ENCODE measurements at regions of chr12 and their contacts with region 1.

Region 1: DNA sequence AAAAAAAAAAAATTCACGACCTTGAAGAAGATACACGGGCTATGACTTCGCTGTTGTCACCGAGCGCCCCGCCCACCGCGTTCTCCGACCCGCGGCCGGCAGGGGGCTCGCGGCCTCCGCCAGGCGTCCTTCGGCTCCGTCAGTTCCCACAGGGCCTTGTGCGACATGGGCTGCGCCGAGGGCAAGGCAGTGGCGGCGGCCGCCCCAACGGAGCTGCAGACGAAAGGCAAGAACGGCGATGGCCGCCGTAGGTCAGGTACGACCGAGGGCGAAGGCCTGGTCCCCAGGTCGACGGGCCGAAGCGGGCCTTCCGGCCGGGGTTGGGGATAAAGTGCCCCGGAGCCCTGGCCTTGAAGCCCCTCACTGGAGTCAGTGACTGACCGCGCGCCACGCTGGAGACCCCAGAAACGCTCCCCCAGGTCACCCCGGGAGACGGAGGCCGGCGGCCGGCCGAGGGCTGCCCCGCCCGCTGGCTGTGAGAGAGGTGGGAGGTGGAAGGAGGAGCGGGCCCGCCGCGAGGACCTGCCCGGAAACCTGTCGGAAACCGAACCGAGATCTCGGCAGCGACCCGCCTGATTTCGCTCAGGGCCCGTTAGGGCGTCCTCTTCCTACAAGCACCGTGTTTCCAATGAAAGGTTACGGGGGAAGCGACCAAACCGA is at the start of gene TXNRD1:
- DNase-seq: peak; percentile 36 to 91
- H3K4me3 ChIP-seq: peak within 1 kb of the TSS; percentile 60 to 72
- H3K27ac ChIP-seq: peak within 1 kb of the TSS; percentile 91 to 92
- H3K4me1 ChIP-seq: peaks cover 5 to 15% of the 10 kb centered on the region in 2 donors
- H3K27me3 ChIP-seq: no peaks in the 10 kb centered on the region
- CTCF ChIP-seq: peak; percentile 91 to 98 (median 94)
- total RNA-seq, gene TXNRD1: 67.4 TPM

Region 2: DNA sequence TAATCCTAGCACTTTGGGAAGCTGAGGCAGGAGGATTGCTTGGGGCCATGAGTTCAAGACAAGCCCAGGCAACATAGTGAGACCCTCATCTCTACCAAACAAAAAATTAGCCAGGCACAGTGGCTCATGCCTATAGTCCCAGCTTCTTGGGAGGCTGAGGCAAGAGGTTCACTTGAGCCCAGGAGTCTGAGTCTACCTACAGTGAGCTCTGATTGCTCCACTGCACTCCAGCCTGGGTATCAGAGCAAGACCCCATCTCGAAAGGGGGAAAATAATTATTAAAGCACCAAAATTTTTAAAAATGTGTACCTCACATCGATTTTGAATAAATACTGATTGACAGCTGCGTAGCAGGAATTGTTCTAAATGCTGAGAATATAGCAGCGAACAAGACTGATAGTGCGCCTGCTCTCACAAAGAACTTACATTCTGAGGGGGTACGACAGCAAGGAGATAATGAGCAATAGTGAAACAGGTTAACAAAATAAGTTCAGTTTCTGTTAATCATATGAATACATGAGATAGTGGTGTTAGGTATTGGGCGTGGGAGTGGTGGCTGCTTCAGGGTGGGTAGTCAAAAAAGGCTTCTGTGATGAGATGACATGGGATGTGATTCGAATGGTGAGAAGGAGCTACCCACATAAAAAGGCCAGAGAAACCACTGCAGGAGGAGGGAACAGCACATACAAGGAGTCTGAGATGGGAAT is 131.8 kb before region 1 on chr12:
- intact Hi-C with region 1: no loop called
- DNase-seq: no peak
- H3K4me3 ChIP-seq: no peak overlapping the region
- H3K27ac ChIP-seq: no peak overlapping the region
- H3K4me1 ChIP-seq: no peaks in the 10 kb centered on the region
- H3K27me3 ChIP-seq: no peaks in the 10 kb centered on the region
- CTCF ChIP-seq: no peak

Region 3: DNA sequence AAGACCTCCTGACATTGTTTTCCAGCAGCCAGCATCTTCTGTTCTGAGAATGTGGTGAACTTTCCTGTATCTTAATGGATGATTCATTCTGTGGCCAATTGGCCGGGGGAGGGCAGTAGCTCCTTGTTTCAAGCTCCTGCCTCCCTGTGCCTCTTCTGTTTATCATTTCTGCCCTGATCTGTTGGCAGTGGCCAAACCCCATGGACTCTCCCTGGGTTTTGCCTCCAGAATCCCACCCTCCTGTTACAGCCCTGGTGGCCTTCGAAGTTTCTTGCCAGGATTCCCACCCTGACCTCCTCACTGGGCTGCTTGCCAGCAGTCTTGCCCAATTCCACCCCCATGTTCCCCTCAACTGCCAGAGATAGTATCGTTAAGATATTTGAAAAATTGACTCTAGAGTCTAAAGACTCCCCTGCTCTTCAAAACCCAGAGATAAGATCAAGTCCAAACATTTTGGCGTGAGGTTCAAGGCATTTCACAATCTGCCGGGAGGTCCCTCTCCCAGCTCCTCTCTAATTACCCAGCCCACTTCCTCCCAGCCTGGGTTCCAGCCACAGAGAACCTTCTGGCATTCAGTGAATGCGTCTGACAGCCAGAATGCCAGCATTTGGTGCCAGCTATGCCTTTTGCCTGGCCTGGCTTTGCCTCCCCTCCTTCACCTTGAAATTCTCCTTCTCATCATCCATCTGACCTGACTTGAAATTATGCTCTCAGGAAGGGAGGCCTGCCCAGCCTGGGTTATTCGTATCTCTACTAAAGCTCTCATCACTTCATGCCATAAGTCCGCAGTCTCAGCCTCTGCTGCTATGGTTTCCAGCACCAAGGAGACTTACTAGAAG is 37.9 kb before region 1 on chr12:
- intact Hi-C with region 1: loop called (anchors 2 kb)
- DNase-seq: peak; percentile 61 to 92
- H3K4me3 ChIP-seq: no peak overlapping the region
- H3K27ac ChIP-seq: peak overlapping the region; percentile 78
- H3K4me1 ChIP-seq: peaks cover 15 to 39% of the 10 kb centered on the region in 2 donors
- H3K27me3 ChIP-seq: no peaks in the 10 kb centered on the region
- CTCF ChIP-seq: peak in 2 of 3 experiments; percentile 31 to 54

Region 4: DNA sequence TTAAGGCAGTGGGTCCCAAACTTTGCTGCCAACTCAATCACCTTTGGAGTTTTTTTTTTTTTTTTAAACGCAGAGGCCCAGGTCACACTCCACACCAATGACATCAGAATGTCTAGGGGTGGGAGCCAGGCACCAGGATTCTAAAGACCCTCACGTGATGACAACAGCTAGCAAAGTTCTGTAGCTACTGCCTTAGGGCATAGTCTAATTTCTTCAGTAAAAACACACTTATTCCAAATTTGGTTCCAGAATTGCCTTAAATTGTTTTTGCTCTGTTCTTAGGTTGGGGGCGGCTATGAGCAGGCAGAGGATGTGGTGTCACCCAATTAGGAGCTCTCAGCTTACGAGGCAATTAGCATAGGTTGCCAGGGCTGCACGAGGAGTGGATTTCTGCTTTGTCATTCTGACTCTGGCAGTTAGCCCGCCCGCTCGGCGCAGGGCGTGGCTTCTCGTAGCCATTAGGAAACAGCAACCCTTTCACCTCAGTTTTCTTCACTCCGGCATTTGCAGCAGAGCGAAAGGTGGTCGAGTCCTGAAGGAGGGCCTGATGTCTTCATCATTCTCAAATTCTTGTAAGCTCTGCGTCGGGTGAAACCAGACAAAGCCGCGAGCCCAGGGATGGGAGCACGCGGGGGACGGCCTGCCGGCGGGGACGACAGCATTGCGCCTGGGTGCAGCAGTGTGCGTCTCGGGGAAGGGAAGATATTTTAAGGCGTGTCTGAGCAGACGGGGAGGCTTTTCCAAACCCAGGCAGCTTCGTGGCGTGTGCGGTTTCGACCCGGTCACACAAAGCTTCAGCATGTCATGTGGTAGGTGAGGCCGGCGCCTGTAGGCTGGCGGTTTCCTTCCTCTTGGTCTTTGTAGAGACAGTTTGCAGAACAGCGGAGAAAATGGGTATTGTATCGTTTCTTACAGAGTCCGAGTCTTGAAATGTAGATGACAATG is 71.0 kb after region 1 on chr12:
- intact Hi-C with region 1: loop called (anchors 1 kb)
- DNase-seq: peak; percentile 86 to 97
- H3K4me3 ChIP-seq: peak overlapping the region; percentile 67 to 70
- H3K27ac ChIP-seq: peak overlapping the region; percentile 86
- H3K4me1 ChIP-seq: peaks cover 9 to 24% of the 10 kb centered on the region in 2 donors
- H3K27me3 ChIP-seq: no peaks in the 10 kb centered on the region
- CTCF ChIP-seq: peak in 1 of 3 experiments; percentile 6

Region 5: DNA sequence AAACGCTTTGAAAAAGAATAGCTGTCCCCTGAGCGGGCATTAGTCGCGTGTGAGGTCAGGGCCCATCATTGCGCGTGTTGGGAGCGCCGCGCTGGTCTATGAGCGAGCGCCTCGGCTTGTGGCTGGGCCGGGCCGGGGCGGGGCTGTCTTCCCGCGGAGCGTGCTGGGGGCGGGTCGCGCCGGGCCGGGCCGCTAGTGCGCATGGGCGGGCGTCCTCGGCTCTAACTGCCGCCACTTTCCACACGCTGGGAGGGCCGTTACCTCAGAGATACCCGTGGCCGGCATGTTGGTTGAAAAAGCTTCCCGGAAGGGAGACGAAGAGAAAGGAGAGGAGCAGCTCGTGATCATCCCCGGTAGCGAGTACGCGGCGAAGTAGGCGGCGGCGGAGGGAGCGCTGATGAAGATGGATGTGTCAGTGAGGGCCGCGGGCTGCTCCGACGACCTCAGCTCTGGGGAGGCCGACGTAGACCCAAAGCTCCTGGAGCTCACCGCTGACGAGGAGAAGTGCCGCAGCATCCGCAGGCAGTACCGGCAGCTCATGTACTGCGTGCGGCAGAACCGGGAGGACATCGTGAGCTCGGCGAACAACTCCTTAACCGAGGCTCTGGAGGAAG is 87.9 kb after region 1 on chr12 and contains the start of gene EID3:
- intact Hi-C with region 1: loop called (anchors 5 kb)
- DNase-seq: peak; percentile 63 to 93
- H3K4me3 ChIP-seq: peak within 1 kb of the TSS; percentile 34 to 69
- H3K27ac ChIP-seq: peak within 1 kb of the TSS; percentile 77 to 85
- H3K4me1 ChIP-seq: peaks cover 28 to 65% of the 10 kb centered on the region in 2 donors
- H3K27me3 ChIP-seq: no peaks in the 10 kb centered on the region
- CTCF ChIP-seq: no peak
- total RNA-seq, gene EID3: 1.4 TPM

Region 6: GRCh38 chr12:104358347-104359003 is 142.7 kb after region 1 on chr12:
- intact Hi-C with region 1: loop called (anchors 2 kb)
- DNase-seq: peak in 1 of 2 donors; percentile 76
- H3K4me3 ChIP-seq: no peak overlapping the region
- H3K27ac ChIP-seq: no peak overlapping the region
- H3K4me1 ChIP-seq: peaks cover 0 to 19% of the 10 kb centered on the region in 2 donors
- H3K27me3 ChIP-seq: no peaks in the 10 kb centered on the region
- CTCF ChIP-seq: peak; percentile 78 to 82 (median 80)

Measured in ascending aorta (tissue), 2 donors.